ENCODE measurements at regions of chr2 and their contacts with region 1.

Region 1: GRCh38 chr2:229586746-229587705 is 127.3 kb downstream of the DNER start:
- DNase-seq: peak; percentile 58 to 98 (median 87)

Region 2: DNA sequence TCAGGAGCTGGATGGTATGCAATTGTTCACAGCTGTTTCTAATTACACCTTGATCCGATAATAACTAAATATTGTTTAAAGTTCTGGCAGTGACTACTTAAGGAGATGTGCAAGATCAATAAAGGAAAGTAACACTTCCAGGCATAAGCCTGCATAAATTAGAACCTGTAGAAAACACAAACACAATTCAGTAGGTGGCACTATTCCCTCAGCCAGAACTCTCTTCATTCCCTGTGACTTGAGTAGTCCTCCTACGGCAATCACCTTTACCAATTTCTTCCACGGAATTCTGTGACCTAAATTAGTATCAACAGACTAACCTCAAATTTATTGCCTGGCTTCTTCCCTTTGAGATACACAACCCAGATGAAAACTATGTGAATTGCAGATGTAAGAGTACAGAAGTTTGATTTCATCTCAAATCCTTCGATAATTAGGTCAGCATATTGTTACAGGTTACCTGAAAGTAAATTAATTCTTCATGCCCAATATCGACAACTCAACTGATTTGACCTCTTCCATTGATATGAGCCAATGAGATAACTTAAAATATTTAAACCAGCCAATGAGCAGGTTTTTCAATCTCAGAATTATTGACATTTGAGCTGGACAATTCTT is 453.8 kb before region 1 on chr2:
- intact Hi-C with region 1: loop called (anchors 2 kb)
- DNase-seq: no peak

Region 3: GRCh38 chr2:229342376-229342775 is 244.7 kb before region 1 on chr2:
- intact Hi-C with region 1: loop called (anchors 2 kb)
- DNase-seq: peak in 8 of 10 donors; percentile 35 to 88 (median 47)

Region 4: GRCh38 chr2:229431327-229431954 is 155.6 kb before region 1 on chr2:
- intact Hi-C with region 1: loop called (anchors 1 kb)
- DNase-seq: no peak

Region 5: GRCh38 chr2:229489016-229489415 is 98.0 kb before region 1 on chr2:
- intact Hi-C with region 1: no loop called
- DNase-seq: peak; percentile 37 to 96 (median 64)

Region 6: DNA sequence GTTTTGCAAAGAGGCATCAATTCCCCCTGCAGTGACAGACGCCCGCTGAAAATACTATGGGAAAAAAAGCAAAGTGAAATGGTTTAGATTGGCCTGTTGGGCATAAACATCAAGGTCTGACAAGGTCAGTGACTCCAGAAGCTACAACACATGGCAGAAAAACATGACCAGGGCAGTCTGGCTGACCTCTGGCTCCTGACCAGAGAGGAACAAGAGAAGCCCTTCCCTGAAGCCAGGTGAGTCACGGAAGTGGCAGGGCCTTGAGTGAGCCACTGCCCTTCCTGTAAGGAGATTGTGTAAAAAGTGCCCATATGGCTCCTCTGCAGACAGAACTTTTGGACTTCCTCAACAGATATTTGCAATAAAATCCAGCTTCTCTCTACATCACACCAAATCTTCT is 55.3 kb after region 1 on chr2:
- intact Hi-C with region 1: no loop called
- DNase-seq: no peak

Region 7: GRCh38 chr2:229714736-229715541 is 127.9 kb after region 1 on chr2:
- intact Hi-C with region 1: loop called (anchors 5 kb)
- DNase-seq: peak; percentile 46 to 91 (median 54)